K562 (cell line): ENCODE measurements at regions of chr2 and their contacts with region 1.

Region 1: GRCh38 chr2:43226558-43226954 is at the start of gene ZFP36L2:
- DNase-seq: peak; percentile 95 to 99 (median 96)
- ATAC-seq: peak; percentile 79
- H3K4me3 ChIP-seq: peak within 1 kb of the TSS; percentile 62
- H3K27ac ChIP-seq: peak within 1 kb of the TSS; percentile 97
- H3K4me1 ChIP-seq: peaks cover 12 to 47% of the 10 kb centered on the region in 2 experiments; a peak in 4 of 5 replicates
- H3K27me3 ChIP-seq: no peaks in the 10 kb centered on the region
- CTCF ChIP-seq: peak in 1 of 3 experiments; percentile 15; a peak in 1 of 6 replicates
- EP300 ChIP-seq: no peak
- POLR2A ChIP-seq: peak; percentile 95
- RAD21 ChIP-seq: no peak
- polyA plus RNA-seq, gene ZFP36L2: 32.4 to 42.8 TPM

Region 2: DNA sequence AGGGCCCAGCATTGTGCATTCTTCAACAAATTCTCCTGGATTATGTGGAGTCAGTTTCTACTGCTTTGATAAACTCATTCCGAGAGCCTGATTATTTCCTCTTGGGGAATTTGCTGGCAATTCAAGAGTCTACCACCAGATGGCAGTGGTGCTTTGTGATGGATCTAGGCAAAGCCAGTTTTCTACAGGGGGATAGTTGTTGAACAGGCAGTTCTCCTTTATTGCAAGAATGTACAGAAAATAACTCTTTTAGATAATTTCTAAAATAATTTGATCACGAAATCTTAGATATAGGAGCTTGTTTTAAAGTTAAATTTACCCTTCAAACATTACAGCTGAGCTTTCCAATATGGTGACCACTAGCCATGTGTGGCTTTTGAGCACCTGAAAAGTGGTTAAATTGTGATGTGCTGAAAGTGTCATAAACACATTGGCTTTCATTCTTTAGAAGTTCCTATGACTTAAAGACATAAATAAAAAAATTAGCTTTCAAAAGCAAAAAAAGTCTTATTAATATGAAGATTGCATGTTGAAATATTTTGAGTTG is 367.5 kb before region 1 on chr2:
- CTCF ChIA-PET with region 1: interaction called, 26 read pairs
- POLR2A ChIA-PET with region 1: interaction called, 4 read pairs
- in situ Hi-C with region 1: no loop called
- intact Hi-C with region 1: loop called (anchors 1 kb)
- DNase-seq: peak; percentile 78 to 85 (median 81)
- ATAC-seq: peak; percentile 72
- H3K4me3 ChIP-seq: no peak overlapping the region
- H3K27ac ChIP-seq: no peak overlapping the region
- H3K4me1 ChIP-seq: peaks cover 0 to 15% of the 10 kb centered on the region in 2 experiments; a peak in 3 of 5 replicates
- H3K27me3 ChIP-seq: no peaks in the 10 kb centered on the region
- CTCF ChIP-seq: peak; percentile 85 to 97 (median 86)
- EP300 ChIP-seq: no peak
- POLR2A ChIP-seq: no peak
- RAD21 ChIP-seq: peak; percentile 98 to 99

Region 3: DNA sequence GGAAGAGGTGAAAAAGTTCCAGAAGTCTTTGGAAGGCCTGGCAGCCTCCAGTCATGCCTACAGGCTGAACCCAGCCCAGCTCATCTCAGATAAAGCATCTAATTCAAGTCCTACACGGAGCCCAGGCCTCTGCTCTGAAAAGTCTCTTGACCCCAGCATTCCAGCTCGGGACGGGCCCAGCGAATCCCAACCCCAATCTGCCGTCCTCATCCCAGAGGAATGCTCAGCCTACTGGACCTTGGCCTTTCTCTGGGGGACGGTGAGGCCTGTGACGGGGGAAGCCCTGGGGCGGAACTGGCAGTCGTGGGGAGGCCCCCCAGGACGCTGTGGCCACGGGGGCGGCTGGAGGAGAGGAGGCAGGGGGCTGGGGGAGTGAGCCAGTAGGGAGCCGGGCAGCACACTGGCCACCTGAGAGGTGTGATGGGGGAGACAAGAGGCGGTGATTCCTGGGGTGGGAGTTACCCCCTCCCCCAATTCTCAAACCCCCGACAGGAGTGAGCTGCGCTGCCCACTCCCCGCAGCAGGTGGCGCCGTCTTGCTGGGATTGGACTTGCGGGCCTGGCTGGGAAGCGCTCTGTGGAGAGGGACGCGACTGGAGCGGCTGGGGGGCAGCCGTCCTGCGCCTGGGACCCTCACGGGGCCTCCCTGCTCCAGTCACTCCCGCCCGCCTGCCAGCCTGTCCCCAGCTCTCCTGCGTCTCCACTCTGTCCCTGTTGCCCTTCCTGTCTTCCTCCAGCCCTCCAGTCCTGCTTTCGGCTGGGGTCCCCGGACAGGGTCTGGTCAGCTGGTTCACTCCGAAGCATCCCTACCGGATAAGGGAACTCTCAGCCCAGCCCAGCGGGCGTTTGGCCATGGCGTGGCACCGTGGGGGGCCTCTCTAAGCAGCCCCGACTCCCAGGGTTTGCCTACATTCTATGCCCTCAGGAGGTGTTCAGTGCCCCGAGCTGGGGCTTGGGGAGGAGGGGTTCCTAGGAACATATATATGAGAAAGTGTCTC is 251.5 kb before region 1 on chr2:
- CTCF ChIA-PET with region 1: interaction called, 11 read pairs
- POLR2A ChIA-PET with region 1: interaction called, 3 read pairs
- in situ Hi-C with region 1: loop called (anchors 10 kb)
- intact Hi-C with region 1: loop called (anchors 5 kb)
- DNase-seq: peak; percentile 66 to 76 (median 75)
- ATAC-seq: peak; percentile 89
- H3K4me3 ChIP-seq: no peak overlapping the region
- H3K27ac ChIP-seq: no peak overlapping the region
- H3K4me1 ChIP-seq: peaks cover 0 to 30% of the 10 kb centered on the region in 2 experiments; a peak in 3 of 5 replicates
- H3K27me3 ChIP-seq: no peaks in the 10 kb centered on the region
- CTCF ChIP-seq: peak; percentile 79 to 88 (median 87)
- EP300 ChIP-seq: no peak
- POLR2A ChIP-seq: no peak
- RAD21 ChIP-seq: peak; percentile 85 to 92

Region 4: DNA sequence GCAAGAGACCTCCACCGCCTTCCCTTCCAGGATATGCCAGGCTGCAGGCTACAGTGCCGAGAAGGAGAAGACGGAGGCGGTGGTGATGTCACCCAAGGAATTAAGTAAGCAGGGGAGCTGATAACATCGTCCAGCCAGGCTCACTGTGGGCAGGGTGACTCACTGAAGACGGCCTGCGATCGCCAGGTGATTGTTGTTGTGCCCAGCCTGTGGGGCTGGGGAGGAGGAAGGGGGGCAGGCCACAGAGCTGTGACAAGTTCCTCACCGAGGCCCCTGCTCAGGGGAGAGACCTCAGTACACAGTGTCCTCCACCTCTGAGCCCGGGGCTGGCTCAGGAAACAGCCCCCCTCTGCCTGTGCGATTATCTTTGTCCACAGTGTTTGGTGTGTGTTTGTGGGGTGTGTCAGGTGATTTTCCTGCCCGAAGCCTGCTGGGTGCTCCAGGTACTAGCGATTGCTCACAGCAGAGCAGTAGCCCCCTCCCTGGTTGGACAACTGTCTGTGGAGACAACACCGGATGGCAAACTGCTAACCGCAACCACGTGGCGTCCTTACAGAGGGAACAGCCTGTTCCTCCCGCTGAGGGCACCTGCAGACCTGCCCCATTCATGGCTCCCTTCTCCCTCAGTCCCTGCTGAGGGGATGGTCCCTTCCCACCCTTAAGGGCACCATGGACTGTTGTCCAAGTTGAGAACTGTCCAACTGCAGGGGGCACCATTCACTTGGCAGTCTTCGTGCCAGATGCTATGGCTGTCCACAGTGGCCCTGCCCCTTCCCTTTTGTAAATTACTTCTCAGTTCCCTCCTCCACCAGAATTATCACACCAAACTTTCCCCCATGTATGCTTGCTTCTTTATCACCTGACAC is 95.3 kb before region 1 on chr2:
- CTCF ChIA-PET with region 1: interaction called, 4 read pairs
- POLR2A ChIA-PET with region 1: interaction called, 6 read pairs
- in situ Hi-C with region 1: loop called (anchors 5 kb)
- intact Hi-C with region 1: loop called (anchors 1 kb)
- DNase-seq: peak; percentile 76 to 79 (median 77)
- ATAC-seq: peak; percentile 83
- H3K4me3 ChIP-seq: no peak overlapping the region
- H3K27ac ChIP-seq: peak overlapping the region; percentile 45; the same call in 2 of the 3 replicates
- H3K4me1 ChIP-seq: peaks cover 23 to 47% of the 10 kb centered on the region in 2 experiments; a peak in 4 of 5 replicates
- H3K27me3 ChIP-seq: no peaks in the 10 kb centered on the region
- CTCF ChIP-seq: peak; percentile 64 to 71 (median 66)
- EP300 ChIP-seq: peak; percentile 5; the same call in 1 of the 2 replicates
- POLR2A ChIP-seq: no peak
- RAD21 ChIP-seq: peak; percentile 54 to 83

Region 5: GRCh38 chr2:43194121-43194869 is 32.3 kb before region 1 on chr2:
- CTCF ChIA-PET with region 1: no interaction called
- POLR2A ChIA-PET with region 1: interaction called, 8 read pairs
- in situ Hi-C with region 1: no loop called
- intact Hi-C with region 1: loop called (anchors 1 kb)
- DNase-seq: no peak
- ATAC-seq: peak; percentile 3; the same call in 2 of the 3 replicates
- H3K4me3 ChIP-seq: no peak overlapping the region
- H3K27ac ChIP-seq: peak overlapping the region; percentile 80
- H3K4me1 ChIP-seq: peaks cover 60 to 75% of the 10 kb centered on the region in 2 experiments
- H3K27me3 ChIP-seq: no peaks in the 10 kb centered on the region
- CTCF ChIP-seq: no peak
- EP300 ChIP-seq: no peak
- POLR2A ChIP-seq: no peak
- RAD21 ChIP-seq: no peak